SK-N-SH (cell line): ENCODE measurements at regions of chr10 and their contacts with region 1.

Region 1: DNA sequence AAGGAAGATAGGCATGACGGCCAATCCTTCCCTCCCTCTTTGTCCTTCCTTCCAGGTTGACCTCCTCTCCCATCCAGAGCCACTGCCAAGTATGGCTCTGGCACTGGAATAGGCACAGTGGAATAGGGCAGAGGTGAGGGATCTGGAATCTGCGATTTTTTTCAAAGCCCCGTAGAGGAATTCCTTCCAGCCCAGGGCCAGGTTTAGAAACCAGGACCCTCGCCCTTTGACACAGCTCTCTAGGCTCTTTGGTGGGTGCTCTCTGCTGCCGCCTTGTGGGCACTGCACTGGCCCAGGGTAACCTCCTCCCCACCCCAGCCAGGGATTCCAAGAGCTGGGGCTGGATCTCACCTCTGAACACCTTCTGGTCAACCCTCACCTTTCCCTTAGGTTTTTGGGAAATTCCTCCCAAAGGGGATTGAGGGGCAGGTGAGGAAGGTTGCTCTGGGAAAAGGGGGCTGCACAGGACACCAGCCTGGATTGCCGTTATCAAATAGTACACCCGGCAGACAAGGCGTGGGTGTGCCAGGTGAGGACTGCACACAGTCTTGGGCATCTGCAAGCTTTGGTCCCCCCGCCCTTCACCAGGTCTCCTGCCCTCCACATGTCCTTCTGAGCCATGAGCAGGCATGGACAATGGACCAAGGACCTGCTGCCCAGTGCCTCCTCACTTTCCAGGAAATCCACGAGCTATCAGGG is 22.8 kb downstream of the C10orf105 start:
- DNase-seq: peak; percentile 88
- H3K4me3 ChIP-seq: no peak overlapping the region; a peak in 1 of 4 replicates
- H3K27ac ChIP-seq: no peak overlapping the region
- H3K4me1 ChIP-seq: peaks cover 0 to 7% of the 10 kb centered on the region in 2 experiments; a peak in 1 of 4 replicates
- H3K27me3 ChIP-seq: peaks cover 28% of the 10 kb centered on the region; the same call in 1 of the 2 replicates
- CTCF ChIP-seq: peak; percentile 82
- EP300 ChIP-seq: no peak
- RAD21 ChIP-seq: peak; percentile 64

Region 2: DNA sequence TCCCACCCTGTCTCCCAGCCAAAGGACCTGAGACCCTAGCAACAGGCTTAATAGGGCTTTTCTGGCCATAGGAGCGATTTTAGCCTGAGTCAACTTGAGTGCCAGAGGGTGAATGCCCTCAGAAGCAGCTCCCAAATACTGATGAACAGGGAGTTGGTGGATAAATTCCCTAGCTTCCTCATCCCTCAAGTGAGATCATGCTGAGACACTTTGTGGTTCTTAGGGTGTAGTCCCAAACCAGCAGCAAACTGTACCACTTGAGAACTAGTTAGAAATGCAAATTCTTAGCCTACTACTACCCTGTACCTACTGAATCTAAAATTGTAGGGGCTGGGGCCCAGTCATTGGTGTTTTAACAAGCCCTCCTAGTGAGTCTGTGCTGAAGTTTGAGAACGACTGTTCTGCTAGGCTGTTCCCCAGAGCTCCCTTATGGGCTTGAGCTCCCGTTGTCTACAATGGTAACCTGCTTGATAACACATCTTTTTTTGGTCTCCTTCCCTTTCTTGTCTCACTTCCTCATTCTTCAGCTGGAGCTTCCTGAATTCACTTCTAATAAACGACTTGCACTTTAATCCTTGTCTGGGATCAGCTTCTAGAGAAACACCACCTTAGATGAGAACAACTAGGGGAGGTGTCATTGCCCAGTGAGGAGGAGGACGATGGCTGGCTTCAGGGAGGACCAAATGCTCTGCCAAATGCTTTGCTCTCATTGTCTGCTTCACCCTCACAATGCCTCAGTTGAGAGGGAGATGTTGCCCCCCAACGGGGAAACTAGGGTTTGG is 318.2 kb before region 1 on chr10:
- CTCF ChIA-PET with region 1: interaction called, 17 read pairs
- POLR2A ChIA-PET with region 1: no interaction called
- DNase-seq: no peak
- H3K4me3 ChIP-seq: no peak overlapping the region
- H3K27ac ChIP-seq: no peak overlapping the region
- H3K4me1 ChIP-seq: peaks cover 0 to 3% of the 10 kb centered on the region in 2 experiments; a peak in 1 of 4 replicates
- H3K27me3 ChIP-seq: no peaks in the 10 kb centered on the region
- CTCF ChIP-seq: no peak
- EP300 ChIP-seq: no peak
- RAD21 ChIP-seq: no peak

Region 3: DNA sequence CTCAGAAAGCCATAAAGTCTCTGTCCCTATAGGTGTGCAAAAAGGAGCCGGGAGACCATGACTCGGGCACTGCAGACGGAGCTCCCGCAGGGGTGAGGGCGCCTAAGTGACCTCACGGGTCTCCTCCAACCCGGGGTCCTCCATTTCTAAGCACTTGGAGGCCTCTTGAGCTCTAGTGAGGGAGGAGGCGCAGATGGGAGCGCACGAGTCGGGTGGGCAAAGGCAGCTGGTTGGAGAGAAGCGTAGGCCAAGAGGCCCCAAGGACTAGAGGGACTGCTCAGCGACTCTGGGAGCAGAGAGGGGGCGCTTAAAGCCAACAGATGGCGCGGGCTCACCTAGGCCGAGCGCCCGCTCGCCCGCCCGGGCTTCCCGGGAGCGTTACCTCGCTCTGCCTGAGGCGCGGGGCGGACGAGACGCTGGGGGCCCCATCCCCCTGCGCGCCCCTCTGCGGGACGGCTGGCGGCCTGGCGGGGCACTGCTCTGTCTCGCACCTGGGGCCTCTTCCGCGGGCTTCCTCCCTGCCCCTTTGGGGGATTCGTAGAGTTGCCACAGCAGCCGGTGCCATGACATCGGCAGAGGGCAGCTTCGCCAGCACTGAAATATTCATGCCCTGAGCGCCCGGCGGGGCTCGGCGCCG is 300.6 kb before region 1 on chr10:
- CTCF ChIA-PET with region 1: interaction called, 30 read pairs
- POLR2A ChIA-PET with region 1: no interaction called
- DNase-seq: peak; percentile 90
- H3K4me3 ChIP-seq: peak overlapping the region in 1 of 2 experiments; percentile 41; a peak in 2 of 4 replicates
- H3K27ac ChIP-seq: no peak overlapping the region
- H3K4me1 ChIP-seq: peaks cover 0 to 9% of the 10 kb centered on the region in 2 experiments; a peak in 1 of 4 replicates
- H3K27me3 ChIP-seq: peaks cover 48% of the 10 kb centered on the region
- CTCF ChIP-seq: no peak
- EP300 ChIP-seq: no peak
- RAD21 ChIP-seq: peak; percentile 83

Region 4: DNA sequence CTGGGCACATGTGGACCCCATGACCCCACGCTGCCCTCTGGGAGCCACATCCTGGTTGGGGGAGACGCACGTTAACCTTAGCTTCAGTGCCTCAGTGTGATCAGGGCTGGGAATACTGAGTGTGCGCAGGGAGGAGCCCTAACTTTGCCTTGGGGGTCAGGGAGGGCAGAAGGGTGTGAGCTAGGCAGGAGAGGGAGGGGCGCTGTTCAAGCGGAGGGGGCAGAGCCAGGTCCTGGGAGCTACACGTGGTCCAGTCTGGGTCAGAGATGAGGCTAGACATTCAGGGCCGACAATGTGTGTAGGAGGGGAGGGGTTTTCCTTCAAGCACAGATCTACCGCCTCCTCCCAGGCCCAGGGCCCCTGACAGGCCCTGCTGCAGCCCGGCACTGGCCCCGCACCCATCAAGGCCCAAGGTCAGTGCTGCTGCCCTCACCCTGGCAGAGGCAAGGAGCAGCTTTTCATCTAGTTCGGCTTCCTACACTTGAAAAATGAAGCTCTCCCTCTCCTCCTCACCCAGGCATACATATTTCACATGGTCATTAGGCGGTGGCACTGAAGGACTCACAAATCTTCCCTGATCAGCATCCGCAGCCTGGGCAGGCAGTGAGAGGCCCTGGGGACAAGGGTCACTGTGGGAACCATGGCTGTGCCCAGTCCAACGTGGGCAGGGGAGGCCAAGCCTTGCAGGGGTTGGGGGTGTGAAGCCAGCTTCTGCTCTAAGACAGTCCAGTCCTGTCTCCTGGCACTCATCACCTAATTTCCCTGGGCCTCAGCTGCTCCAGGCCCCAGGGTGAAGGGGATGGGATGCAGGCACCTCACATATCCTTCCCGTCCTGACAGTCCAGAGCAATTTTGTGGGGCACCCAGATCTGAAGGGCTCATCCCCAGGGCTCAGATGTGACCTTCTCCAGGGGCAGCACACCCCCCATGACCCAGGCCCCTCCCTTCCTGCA is 24.5 kb before region 1 on chr10:
- CTCF ChIA-PET with region 1: interaction called, 20 read pairs
- POLR2A ChIA-PET with region 1: no interaction called
- DNase-seq: no peak
- H3K4me3 ChIP-seq: no peak overlapping the region
- H3K27ac ChIP-seq: no peak overlapping the region
- H3K4me1 ChIP-seq: peaks cover 0 to 2% of the 10 kb centered on the region in 2 experiments; a peak in 1 of 4 replicates
- H3K27me3 ChIP-seq: 0 out of 2 replicates have a peak, but pooled peaks cover 2% of the 10 kb centered on the region
- CTCF ChIP-seq: no peak
- EP300 ChIP-seq: no peak
- RAD21 ChIP-seq: no peak

Region 5: GRCh38 chr10:71771821-71772617 is 75.2 kb after region 1 on chr10:
- CTCF ChIA-PET with region 1: interaction called, 13 read pairs
- POLR2A ChIA-PET with region 1: no interaction called
- DNase-seq: no peak
- H3K4me3 ChIP-seq: peak overlapping the region in 1 of 2 experiments; percentile 68; a peak in 1 of 4 replicates
- H3K27ac ChIP-seq: no peak overlapping the region; a peak in 1 of 4 replicates
- H3K4me1 ChIP-seq: peaks cover 22 to 26% of the 10 kb centered on the region in 2 experiments; a peak in 3 of 4 replicates
- H3K27me3 ChIP-seq: no peaks in the 10 kb centered on the region
- CTCF ChIP-seq: no peak
- EP300 ChIP-seq: no peak
- RAD21 ChIP-seq: no peak

Region 6: DNA sequence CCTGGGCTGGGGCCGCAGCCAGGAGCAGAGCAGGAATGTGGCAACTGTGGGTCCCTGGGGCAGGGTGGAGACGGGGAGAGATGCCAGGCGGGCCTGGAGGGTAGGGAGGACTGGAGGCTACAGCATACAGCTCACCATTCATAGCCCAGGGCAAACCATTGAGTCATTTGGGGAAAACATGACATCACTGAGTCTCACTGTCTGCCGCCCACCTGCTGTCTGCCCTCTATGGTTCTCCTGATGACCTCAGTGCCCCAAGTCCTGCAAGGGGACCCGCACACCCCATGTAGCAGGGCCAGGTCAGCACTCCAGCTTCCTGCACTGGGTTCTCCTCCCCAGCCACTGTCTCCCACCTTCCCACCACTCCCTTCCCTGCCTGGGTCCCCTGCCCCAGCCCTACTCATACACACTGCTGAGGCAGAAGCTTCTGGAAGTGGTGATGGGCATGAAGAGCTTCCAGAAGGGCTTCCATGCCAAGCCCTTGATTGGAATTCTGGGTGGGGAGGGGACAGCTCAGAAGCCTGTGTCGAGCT is 277.8 kb after region 1 on chr10:
- CTCF ChIA-PET with region 1: no interaction called
- POLR2A ChIA-PET with region 1: no interaction called
- DNase-seq: no peak
- H3K4me3 ChIP-seq: no peak overlapping the region
- H3K27ac ChIP-seq: peak overlapping the region in 1 of 2 experiments; percentile 76; a peak in 2 of 4 replicates
- H3K4me1 ChIP-seq: peaks cover 38 to 40% of the 10 kb centered on the region in 2 experiments; a peak in 3 of 4 replicates
- H3K27me3 ChIP-seq: no peaks in the 10 kb centered on the region
- CTCF ChIP-seq: no peak
- EP300 ChIP-seq: no peak
- RAD21 ChIP-seq: no peak